ENCODE measurements at regions of chr20 and their contacts with region 1.

Region 1: GRCh38 chr20:20712474-20713243 is at the start of gene RALGAPA2:
- DNase-seq: peak; percentile 98
- H3K4me3 Mint-ChIP-seq: peak within 1 kb of the TSS; percentile 93
- H3K27ac Mint-ChIP-seq: peak within 1 kb of the TSS; percentile 93
- H3K4me1 Mint-ChIP-seq: peaks cover 32% of the 10 kb centered on the region
- H3K27me3 Mint-ChIP-seq: peaks cover 3% of the 10 kb centered on the region
- total RNA-seq, gene RALGAPA2: 14.6 and 18.7 TPM in 2 replicates

Region 2: GRCh38 chr20:20017001-20017843 is 695.4 kb before region 1 on chr20 and contains the start of gene NAA20:
- intact Hi-C with region 1: loop called (anchors 5 kb)
- DNase-seq: peak; percentile 97
- H3K4me3 Mint-ChIP-seq: peak within 1 kb of the TSS; percentile 94
- H3K27ac Mint-ChIP-seq: peak within 1 kb of the TSS; percentile 85
- H3K4me1 Mint-ChIP-seq: peaks cover 34% of the 10 kb centered on the region
- H3K27me3 Mint-ChIP-seq: no peaks in the 10 kb centered on the region
- total RNA-seq, gene NAA20: 85.4 and 96.4 TPM in 2 replicates

Region 3: GRCh38 chr20:20052074-20052970 is 660.3 kb before region 1 on chr20 and contains the starts of genes CFAP61 and CRNKL1:
- intact Hi-C with region 1: loop called (anchors 1 kb)
- DNase-seq: peak; percentile 99
- H3K4me3 Mint-ChIP-seq: peak within 1 kb of the TSS; percentile 98
- H3K27ac Mint-ChIP-seq: peak within 1 kb of the TSS; percentile 96
- H3K4me1 Mint-ChIP-seq: peaks cover 10% of the 10 kb centered on the region
- H3K27me3 Mint-ChIP-seq: peaks cover 1% of the 10 kb centered on the region
- total RNA-seq, gene CFAP61: not detected in 2 replicates
- total RNA-seq, gene CRNKL1: 22.7 and 25.1 TPM in 2 replicates

Region 4: DNA sequence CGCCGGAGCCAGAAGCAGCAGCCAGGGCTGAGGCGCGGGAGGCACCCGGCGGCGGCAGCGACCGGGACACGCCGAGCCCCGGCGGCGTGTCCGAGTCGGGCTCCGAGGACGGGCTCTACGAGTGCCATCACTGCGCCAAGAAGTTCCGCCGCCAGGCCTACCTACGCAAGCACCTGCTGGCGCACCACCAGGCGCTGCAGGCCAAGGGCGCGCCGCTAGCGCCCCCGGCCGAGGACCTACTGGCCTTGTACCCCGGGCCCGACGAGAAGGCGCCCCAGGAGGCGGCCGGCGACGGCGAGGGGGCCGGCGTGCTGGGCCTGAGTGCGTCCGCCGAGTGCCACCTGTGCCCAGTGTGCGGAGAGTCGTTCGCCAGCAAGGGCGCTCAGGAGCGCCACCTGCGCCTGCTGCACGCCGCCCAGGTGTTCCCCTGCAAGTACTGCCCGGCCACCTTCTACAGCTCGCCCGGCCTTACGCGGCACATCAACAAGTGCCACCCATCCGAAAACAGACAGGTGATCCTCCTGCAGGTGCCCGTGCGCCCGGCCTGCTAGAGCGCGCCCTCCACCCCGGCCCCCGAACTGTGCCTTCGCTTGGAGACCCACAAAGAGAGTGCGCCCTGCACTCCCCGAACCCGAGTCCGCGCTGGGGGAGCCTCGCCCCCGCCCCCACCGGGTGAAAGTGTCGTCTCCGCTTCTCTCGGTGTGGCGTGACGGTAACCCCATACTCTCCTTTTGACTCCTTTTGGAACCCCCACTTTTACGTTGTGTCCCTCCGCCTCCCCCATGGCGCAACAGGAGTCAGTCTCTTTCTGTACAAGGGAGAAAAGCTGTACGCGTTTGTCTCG is 343.2 kb before region 1 on chr20:
- intact Hi-C with region 1: loop called (anchors 5 kb)
- DNase-seq: peak; percentile 62
- H3K4me3 Mint-ChIP-seq: peak overlapping the region; percentile 83
- H3K27ac Mint-ChIP-seq: peak overlapping the region; percentile 83
- H3K4me1 Mint-ChIP-seq: peaks cover 19% of the 10 kb centered on the region
- H3K27me3 Mint-ChIP-seq: peaks cover 56% of the 10 kb centered on the region

Region 5: GRCh38 chr20:20498076-20498861 is 214.4 kb before region 1 on chr20:
- intact Hi-C with region 1: loop called (anchors 5 kb)
- DNase-seq: peak; percentile 48
- H3K4me3 Mint-ChIP-seq: no peak overlapping the region
- H3K27ac Mint-ChIP-seq: peak overlapping the region; percentile 94
- H3K4me1 Mint-ChIP-seq: peaks cover 53% of the 10 kb centered on the region
- H3K27me3 Mint-ChIP-seq: no peaks in the 10 kb centered on the region